Activated CD4-positive, alpha-beta memory T cell treated with anti-CD3 and anti-CD28 coated beads, Interleukin-2, amount 10 ng/mL, durations not matched to agents 7 days and 5 days (primary cell): ENCODE measurements at regions of chr14 and their contacts with region 1.

Region 1: DNA sequence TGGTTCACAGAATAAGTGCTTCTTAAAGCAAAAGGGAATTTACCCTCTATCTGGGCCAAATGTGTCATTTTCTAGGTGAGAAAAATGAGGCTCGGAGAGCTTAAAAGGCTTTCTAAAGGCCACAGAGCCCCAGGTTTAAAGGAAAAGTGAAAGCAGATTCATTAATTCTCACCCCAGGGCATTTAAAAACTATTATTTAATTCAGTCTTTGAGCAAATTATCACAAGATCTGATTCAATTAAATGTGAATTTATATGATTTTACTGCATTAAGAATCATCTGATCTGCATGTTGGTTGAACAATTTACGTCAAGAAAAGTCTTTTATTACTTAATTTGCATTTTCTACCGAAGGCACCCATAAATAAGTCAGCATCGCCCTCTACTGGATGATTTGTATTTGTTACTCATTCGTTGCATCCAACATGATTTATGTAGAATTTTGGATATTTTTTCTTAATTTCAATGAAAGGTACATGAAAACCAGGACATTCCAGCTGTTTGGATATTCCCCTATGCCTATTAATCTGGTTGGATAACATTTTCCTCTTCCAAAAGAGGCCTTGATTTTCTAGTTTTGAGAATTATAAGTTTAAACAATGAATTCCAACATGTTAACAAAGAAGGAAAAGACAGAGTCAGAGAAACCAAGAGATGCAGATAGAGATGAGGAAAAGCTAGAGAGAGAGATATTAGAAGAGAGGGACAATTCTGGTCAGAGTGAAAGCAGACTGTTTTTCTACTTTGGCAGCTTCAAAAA is 19.1 kb upstream of the DHRS7 start:
- DNase-seq: no peak
- H3K4me3 Mint-ChIP-seq: peak overlapping the region; percentile 45
- H3K27ac Mint-ChIP-seq: peak overlapping the region; percentile 2
- H3K4me1 Mint-ChIP-seq: peaks cover 12% of the 10 kb centered on the region
- H3K27me3 Mint-ChIP-seq: peaks cover 1% of the 10 kb centered on the region

Region 2: GRCh38 chr14:59964251-59965007 is 219.9 kb before region 1 on chr14:
- CTCF ChIA-PET with region 1: interaction called, 149 read pairs
- POLR2A ChIA-PET with region 1: interaction called, 10 read pairs
- DNase-seq: no peak
- H3K4me3 Mint-ChIP-seq: no peak overlapping the region
- H3K27ac Mint-ChIP-seq: no peak overlapping the region
- H3K4me1 Mint-ChIP-seq: peaks cover 10% of the 10 kb centered on the region
- H3K27me3 Mint-ChIP-seq: peaks cover 14% of the 10 kb centered on the region

Region 3: GRCh38 chr14:60064491-60065072 is 119.7 kb before region 1 on chr14:
- CTCF ChIA-PET with region 1: interaction called, 52 read pairs
- POLR2A ChIA-PET with region 1: interaction called, 3 read pairs
- DNase-seq: no peak
- H3K4me3 Mint-ChIP-seq: no peak overlapping the region
- H3K27ac Mint-ChIP-seq: no peak overlapping the region
- H3K4me1 Mint-ChIP-seq: no peaks in the 10 kb centered on the region
- H3K27me3 Mint-ChIP-seq: peaks cover 8% of the 10 kb centered on the region

Region 4: DNA sequence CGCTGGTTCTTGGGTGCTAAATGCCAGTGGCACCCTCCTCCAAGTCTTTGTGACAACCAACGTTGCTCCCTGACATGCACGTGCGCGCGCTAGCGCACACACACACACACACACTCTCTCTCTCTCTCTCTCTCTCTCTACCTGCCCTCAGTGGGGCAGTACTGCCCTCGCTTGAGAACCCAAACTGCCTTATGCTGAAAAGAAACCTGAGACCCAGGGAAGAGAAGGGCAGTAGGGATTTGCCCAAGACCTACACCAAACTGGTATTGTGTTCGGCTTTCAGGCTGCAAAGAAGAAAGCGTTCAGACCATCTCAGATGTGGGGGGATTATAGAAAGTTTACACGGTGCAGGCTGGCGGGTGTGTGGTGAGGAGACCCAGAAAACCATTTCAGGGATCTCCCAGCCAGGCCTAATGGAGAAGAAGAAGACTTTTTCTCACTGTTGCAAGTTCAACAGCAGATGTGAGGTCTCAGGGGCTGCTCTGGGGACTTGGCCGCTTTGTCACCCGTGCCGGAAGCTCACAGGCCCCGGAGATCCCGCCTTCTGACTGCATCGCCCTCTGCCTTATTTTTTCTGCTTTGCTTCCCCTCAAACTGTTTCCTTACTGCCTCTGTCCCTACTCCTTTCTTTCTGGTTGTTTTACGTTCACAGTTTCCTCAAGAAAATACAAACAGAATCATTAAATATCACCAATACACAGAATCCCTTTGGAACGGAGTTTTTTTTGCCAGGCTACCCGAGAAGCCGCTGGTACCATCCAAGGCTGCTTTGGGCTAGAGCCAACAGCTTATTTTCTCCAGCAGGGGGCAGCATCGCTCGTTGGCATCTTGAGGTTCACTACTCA is 147.1 kb after region 1 on chr14:
- CTCF ChIA-PET with region 1: interaction called, 22 read pairs
- POLR2A ChIA-PET with region 1: no interaction called
- DNase-seq: peak; percentile 81
- H3K4me3 Mint-ChIP-seq: peak overlapping the region; percentile 76
- H3K27ac Mint-ChIP-seq: peak overlapping the region; percentile 80
- H3K4me1 Mint-ChIP-seq: peaks cover 31% of the 10 kb centered on the region
- H3K27me3 Mint-ChIP-seq: peaks cover 33% of the 10 kb centered on the region